Activated CD4-positive, alpha-beta memory T cell treated with anti-CD3 and anti-CD28 coated beads for 36 hours (primary cell): ENCODE measurements at regions of chr3 and their contacts with region 1.

Region 1: DNA sequence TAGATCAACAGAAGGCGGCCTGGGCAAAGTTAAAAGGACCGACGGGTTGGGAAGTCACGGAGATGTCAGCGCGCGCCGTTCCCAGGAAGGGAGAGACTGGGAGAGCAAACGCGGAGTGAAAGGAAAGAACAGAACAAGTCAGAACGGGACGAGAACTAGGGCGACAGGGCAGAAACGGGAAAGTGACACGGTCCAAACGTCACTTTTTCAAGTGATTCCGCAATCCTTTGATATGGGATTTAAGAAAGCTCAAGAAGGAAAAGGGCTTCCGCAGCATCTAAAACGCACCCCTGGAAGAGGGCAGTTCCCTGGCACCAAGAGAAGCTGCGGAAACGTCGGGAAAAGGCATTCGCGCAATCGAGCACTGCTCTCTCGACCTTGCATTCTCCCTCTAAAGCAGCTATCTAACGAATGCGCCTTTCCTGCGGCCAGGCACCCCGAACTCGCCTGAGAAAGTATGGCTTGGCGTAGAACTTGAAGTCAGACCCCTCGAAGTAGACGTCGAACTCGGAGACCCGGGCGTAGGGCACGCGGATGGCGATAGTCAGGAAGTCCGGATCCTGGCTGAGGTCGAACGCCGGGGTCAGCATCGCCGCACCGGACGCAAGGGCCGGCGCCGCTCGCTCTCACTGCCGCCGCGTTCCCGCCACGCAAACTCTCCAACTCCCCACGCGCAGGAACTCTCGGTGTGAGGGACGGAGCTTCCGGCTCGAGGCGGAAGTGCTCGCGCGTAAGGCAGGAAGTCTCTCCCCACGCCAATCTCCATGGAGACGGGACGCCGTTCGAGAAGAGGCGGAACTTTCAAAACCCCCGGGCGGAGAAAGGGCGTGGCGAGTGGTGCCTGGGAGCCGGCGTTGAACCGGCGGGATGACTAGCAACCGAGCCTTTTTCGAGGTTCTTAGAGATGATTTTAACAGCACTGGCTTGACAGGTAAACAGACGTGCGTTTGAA is at the start of gene SHQ1:
- DNase-seq: peak; percentile 98
- H3K4me3 Mint-ChIP-seq: peak within 1 kb of the TSS; percentile 93
- H3K27ac Mint-ChIP-seq: peak within 1 kb of the TSS; percentile 47
- H3K4me1 Mint-ChIP-seq: peaks cover 48% of the 10 kb centered on the region
- H3K27me3 Mint-ChIP-seq: no peaks in the 10 kb centered on the region
- total RNA-seq, gene SHQ1: 27.9 to 30.1 TPM

Region 2: DNA sequence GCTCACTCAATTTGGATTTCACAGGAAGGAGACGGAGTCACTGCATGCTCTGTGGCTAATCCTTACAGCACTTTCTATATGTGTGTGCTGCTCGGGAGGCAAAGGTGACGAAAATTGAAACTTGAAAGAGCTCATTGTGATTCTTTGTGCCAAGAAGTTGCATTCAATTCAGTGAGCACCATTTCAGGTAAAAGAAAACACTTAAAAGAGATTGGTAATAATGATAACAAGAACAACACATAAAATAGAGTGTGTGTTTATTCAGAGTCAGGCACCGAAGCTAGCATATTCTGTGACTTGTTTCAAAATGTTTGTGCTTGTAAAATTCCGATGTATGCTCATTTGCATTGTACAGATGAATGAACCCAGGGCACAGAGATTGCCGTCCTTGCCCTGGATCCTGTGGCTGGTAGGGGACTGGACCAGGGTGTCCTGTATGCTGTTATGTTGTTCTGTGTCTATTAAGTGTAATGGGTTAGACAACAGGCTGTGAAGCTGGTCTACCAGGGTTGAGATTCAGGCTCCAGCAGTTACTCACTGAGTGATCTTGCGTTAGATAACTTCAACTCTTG is 869.8 kb before region 1 on chr3:
- CTCF ChIA-PET with region 1: no interaction called
- POLR2A ChIA-PET with region 1: no interaction called
- intact Hi-C with region 1: loop called (anchors 5 kb)
- DNase-seq: peak; percentile 67
- H3K4me3 Mint-ChIP-seq: peak overlapping the region; percentile 38
- H3K27ac Mint-ChIP-seq: peak overlapping the region; percentile 88
- H3K4me1 Mint-ChIP-seq: peaks cover 44% of the 10 kb centered on the region
- H3K27me3 Mint-ChIP-seq: peaks cover 19% of the 10 kb centered on the region

Region 3: DNA sequence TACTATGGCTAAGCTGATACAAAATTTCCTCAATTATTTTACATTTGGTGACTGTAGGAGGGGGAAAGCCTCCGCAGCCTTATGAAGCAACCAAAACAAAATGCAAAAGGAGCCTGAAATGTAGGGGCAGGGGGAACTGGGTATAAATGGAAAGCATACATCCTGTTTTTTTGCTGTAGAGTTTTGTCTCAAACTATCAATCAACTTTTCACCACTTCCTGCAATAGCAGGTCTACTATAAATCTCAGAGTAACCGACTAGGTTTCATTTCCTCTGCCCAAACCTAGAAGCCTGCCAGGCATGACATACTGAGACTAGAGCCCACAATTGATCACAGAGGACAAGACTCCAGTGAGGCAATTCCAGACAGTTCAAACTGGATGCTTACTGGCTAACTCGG is 91.1 kb before region 1 on chr3:
- CTCF ChIA-PET with region 1: no interaction called
- POLR2A ChIA-PET with region 1: no interaction called
- intact Hi-C with region 1: loop called (anchors 1 kb)
- DNase-seq: peak; percentile 62
- H3K4me3 Mint-ChIP-seq: peak overlapping the region; percentile 33
- H3K27ac Mint-ChIP-seq: peak overlapping the region; percentile 77
- H3K4me1 Mint-ChIP-seq: peaks cover 36% of the 10 kb centered on the region
- H3K27me3 Mint-ChIP-seq: no peaks in the 10 kb centered on the region

Region 4: GRCh38 chr3:72938471-72939265 is 90.6 kb after region 1 on chr3:
- CTCF ChIA-PET with region 1: interaction called, 7 read pairs
- POLR2A ChIA-PET with region 1: no interaction called
- intact Hi-C with region 1: loop called (anchors 1 kb)
- DNase-seq: peak; percentile 34
- H3K4me3 Mint-ChIP-seq: no peak overlapping the region
- H3K27ac Mint-ChIP-seq: no peak overlapping the region
- H3K4me1 Mint-ChIP-seq: peaks cover 3% of the 10 kb centered on the region
- H3K27me3 Mint-ChIP-seq: peaks cover 2% of the 10 kb centered on the region

Region 5: DNA sequence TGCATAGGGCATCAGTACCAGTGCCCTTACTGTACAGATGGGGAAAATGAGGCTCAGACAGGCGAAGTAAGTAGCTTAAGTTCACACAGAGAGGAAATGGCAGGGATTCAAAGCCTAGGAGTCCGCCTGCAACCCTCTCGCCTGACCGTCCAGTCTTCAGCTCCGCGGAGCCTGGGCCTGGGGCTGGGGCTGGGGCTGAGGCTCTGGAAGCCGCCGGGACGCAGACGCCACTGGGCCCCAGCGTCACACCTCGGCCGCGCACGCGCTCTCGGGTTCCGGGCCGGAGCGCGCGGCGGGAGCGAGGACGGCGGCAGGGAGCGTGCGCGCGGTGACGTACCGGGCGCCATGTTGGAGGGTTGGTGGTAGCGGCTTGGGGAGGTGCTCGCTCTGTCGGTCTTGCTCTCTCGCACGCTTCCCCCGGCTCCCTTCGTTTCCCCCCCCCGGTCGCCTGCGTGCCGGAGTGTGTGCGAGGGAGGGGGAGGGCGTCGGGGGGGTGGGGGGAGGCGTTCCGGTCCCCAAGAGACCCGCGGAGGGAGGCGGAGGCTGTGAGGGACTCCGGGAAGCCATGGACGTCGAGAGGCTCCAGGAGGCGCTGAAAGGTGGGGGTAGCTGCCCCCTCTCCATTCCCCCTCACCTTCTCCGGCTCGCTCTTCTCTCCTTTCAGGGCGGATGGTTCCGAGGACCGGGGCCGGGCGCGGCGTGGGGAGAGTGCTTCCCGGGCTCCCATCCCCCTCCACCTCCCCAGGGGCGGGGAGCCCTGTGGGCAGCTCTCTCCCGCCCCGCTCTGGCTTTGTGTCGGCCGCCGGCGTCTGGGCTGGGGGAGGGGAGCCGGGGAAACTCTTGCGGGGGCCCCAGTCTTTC is 148.7 kb after region 1 on chr3 and contains the start of gene PPP4R2:
- CTCF ChIA-PET with region 1: interaction called, 7 read pairs
- POLR2A ChIA-PET with region 1: no interaction called
- intact Hi-C with region 1: loop called (anchors 2 kb)
- DNase-seq: peak; percentile 94
- H3K4me3 Mint-ChIP-seq: peak within 1 kb of the TSS; percentile 92
- H3K27ac Mint-ChIP-seq: peak within 1 kb of the TSS; percentile 90
- H3K4me1 Mint-ChIP-seq: peaks cover 39% of the 10 kb centered on the region
- H3K27me3 Mint-ChIP-seq: no peaks in the 10 kb centered on the region
- total RNA-seq, gene PPP4R2: 107 to 108 TPM

Region 6: DNA sequence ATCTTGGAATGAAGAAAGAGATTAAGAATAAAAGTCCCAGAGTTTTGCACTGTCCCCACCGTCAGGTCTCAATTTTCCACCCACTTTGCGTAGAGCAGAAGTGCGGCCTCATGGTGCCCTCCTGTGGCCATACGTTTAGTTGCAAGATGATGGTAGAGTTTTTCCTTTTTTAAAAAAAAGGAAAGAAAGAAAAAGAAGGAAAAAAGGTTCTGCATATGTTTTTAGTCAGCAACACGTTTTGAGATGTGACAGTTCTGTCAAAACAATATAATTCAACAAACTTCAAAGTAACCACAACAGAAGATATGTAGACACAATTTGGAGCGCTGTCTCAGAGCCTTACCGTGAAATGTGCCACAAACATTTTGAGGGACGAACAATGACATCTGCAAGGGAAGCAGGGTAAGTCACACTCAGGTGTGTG is 238.1 kb after region 1 on chr3:
- CTCF ChIA-PET with region 1: interaction called, 72 read pairs
- POLR2A ChIA-PET with region 1: no interaction called
- intact Hi-C with region 1: loop called (anchors 1 kb)
- DNase-seq: peak; percentile 62
- H3K4me3 Mint-ChIP-seq: no peak overlapping the region
- H3K27ac Mint-ChIP-seq: no peak overlapping the region
- H3K4me1 Mint-ChIP-seq: peaks cover 11% of the 10 kb centered on the region
- H3K27me3 Mint-ChIP-seq: no peaks in the 10 kb centered on the region